ENCODE measurements at regions of chr17 and their contacts with region 1.

Region 1: DNA sequence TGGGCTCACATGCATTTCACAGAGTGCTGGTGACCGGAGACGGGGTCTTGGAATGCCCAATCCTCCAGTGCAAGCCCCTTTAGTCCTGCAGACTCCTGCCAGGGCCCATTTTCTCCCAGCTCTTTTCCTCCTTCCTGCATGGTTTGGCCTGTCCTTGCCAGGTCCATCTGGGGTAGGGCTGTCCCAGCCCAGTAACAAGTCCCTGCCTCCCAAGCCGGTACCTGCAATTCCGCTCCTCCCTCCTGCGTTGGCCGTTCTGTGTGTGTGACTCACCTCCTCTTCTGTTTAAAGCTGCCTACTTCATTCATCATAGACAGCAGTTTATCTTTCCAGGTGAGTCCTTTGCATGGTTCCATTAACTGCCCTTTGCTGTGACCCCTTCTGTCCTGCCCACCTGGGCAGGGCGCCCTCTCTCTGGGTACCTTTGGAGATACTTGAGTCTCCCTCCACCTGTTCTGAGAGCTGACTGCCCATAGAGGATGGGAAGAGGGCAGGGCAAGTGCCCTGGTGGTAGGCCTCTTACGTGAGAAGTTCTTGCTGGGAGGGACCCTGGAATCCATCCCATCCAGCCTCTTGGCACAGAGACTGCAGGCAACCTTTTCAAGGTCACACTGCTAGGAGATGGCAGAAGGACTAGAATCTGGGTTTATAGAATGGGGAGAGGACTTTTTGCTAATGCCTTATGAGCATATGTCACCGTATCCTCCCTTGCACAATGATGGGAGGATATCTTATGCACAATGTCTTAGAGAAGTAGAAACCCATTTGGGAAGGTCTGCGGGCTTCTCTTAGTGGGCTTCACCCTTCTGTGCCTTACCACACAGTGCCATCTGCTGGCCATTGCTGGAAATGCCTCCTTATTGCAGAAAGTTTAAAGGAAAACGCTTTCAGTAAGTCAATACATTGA is 29.7 kb upstream of the LGALS9 start:
- DNase-seq: peak; percentile 86
- H3K4me3 Mint-ChIP-seq: no peak overlapping the region
- H3K27ac Mint-ChIP-seq: no peak overlapping the region
- H3K4me1 Mint-ChIP-seq: peaks cover 4% of the 10 kb centered on the region
- H3K27me3 Mint-ChIP-seq: no peaks in the 10 kb centered on the region

Region 2: DNA sequence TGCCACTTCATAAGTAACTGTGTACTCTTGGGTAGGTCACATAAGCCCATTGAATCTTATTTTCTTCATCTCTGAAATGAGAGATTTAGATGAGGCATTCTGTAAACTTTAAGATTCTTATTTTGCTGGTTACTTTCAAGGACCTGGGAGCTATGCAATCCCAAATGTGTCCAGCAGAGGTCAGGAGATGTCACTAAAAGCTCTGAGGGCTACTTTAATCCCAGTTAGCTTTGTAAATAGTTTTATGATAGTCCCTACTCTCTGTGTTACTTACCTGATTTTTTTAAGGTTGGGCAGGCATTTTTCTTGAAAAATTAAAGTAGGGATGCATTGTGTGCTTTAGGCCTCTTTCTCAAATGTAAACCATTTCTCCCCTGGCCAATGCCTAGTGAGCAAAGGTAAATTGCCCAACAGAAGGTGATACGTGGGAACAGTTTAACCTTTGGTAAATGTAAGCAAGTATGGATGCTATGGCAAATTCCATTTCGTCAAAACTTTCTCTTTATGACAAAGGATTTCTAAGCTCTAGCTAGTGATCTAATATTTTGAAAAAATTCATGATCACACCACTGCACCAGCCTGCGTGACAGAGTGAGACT is 364.5 kb before region 1 on chr17:
- CTCF ChIA-PET with region 1: interaction called, 198 read pairs
- POLR2A ChIA-PET with region 1: no interaction called
- intact Hi-C with region 1: loop called (anchors 1 kb)
- DNase-seq: peak; percentile 82
- H3K4me3 Mint-ChIP-seq: no peak overlapping the region
- H3K27ac Mint-ChIP-seq: no peak overlapping the region
- H3K4me1 Mint-ChIP-seq: peaks cover 15% of the 10 kb centered on the region
- H3K27me3 Mint-ChIP-seq: peaks cover 4% of the 10 kb centered on the region

Region 3: GRCh38 chr17:27381007-27381501 is 220.3 kb before region 1 on chr17:
- CTCF ChIA-PET with region 1: interaction called, 187 read pairs
- POLR2A ChIA-PET with region 1: no interaction called
- intact Hi-C with region 1: loop called (anchors 1 kb)
- DNase-seq: peak; percentile 90
- H3K4me3 Mint-ChIP-seq: no peak overlapping the region
- H3K27ac Mint-ChIP-seq: no peak overlapping the region
- H3K4me1 Mint-ChIP-seq: peaks cover 3% of the 10 kb centered on the region
- H3K27me3 Mint-ChIP-seq: peaks cover 11% of the 10 kb centered on the region

Region 4: DNA sequence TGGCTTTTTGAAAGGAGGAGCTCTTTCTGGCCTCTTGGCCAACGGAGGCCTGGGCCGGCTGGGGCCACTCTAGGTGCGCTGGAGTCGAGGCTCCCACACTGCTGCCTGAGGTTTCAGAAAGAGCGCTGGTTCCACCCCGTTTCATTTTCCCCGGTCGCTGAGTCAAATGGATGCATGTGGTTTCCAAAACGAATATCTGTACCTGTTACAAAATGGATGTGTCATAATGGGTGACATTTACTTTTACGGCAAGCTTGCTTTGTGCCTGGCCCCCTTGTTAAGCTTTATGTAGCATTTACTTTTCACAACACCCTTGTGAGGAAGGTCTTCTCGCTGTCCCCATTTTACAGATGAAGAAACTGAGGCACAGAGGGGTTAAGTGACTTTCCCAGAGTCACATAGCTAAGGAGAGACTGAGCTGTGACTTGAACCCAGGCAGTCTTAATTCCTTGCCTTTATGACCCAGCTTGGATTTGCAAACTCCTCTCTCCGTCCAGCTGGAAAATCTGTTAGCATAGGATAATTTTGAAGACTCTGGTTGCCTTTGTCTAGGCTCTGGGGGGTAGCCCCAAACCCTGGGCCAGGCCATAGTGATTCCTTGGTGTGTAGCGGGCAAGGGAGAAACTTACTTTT is 134.5 kb before region 1 on chr17:
- CTCF ChIA-PET with region 1: interaction called, 42 read pairs
- POLR2A ChIA-PET with region 1: interaction called, 5 read pairs
- intact Hi-C with region 1: no loop called
- DNase-seq: peak; percentile 93
- H3K4me3 Mint-ChIP-seq: peak overlapping the region; percentile 68
- H3K27ac Mint-ChIP-seq: peak overlapping the region; percentile 90
- H3K4me1 Mint-ChIP-seq: peaks cover 91% of the 10 kb centered on the region
- H3K27me3 Mint-ChIP-seq: no peaks in the 10 kb centered on the region

Region 5: DNA sequence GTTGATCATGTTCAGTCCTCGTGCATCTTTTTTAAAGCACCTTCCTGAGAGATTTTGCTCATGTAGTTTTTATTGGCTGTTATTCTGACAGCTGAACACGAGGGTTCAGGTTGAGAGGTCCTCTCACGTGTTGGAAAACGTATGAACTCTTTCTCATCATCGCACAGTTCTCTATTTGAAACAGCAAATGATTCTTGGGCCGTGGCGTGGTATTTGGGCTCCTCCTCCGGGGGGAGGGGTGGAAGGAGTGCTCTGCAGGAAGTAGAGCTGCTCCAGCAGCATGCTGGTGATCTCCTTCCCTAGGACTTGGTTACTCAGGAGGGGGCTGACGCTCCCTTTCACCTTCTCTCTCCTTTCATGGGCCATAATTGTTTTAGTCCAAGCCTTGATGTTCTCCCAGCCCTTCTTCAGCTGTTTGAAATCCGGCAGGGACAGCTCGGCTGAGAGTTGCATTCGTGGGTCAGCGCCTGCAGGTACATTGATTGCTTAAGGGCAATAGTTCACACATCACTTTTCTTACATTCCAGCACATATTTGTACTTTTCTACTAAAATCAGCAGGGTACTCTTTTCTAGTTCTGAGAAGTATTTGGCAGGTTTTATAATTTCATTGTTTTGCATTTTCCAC is 74.6 kb before region 1 on chr17:
- CTCF ChIA-PET with region 1: interaction called, 14 read pairs
- POLR2A ChIA-PET with region 1: no interaction called
- intact Hi-C with region 1: no loop called
- DNase-seq: peak; percentile 78
- H3K4me3 Mint-ChIP-seq: no peak overlapping the region
- H3K27ac Mint-ChIP-seq: no peak overlapping the region
- H3K4me1 Mint-ChIP-seq: peaks cover 70% of the 10 kb centered on the region
- H3K27me3 Mint-ChIP-seq: no peaks in the 10 kb centered on the region

Region 6: DNA sequence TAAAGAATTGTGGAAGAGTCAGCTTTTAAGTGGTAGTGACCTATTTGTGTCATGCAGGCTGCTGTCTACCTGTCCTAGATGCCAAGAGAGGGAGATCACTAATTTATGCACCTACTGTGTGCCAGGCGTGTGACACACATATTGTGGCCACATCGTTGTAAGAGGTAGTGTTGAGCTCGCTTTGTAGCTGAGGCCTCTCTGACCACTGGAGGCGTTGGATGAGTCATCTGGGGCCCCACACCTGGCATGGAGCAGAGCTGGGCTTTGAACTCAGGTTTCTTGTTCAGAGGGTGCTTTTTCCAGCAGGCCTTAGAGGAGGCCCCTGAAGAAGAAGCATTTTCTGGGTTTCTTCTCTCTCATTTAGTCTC is 22.6 kb before region 1 on chr17:
- CTCF ChIA-PET with region 1: interaction called, 29 read pairs
- POLR2A ChIA-PET with region 1: no interaction called
- intact Hi-C with region 1: no loop called
- DNase-seq: peak; percentile 90
- H3K4me3 Mint-ChIP-seq: no peak overlapping the region
- H3K27ac Mint-ChIP-seq: peak overlapping the region; percentile 84
- H3K4me1 Mint-ChIP-seq: peaks cover 64% of the 10 kb centered on the region
- H3K27me3 Mint-ChIP-seq: no peaks in the 10 kb centered on the region

Measured in activated CD4-positive, alpha-beta memory T cell treated with anti-CD3 and anti-CD28 coated beads for 36 hours (primary cell).